Activated CD4-positive, alpha-beta T cell treated with anti-CD3 and anti-CD28 coated beads, Interleukin-2, amount 10 ng/mL, durations not matched to agents 7 days and 5 days (primary cell): ENCODE measurements at regions of chr22 and their contacts with region 1.

Region 1: GRCh38 chr22:50562523-50563412 is at the start of gene SYCE3:
- DNase-seq: peak; percentile 97
- H3K4me3 Mint-ChIP-seq: peak within 1 kb of the TSS; percentile 80
- H3K27ac Mint-ChIP-seq: peak within 1 kb of the TSS; percentile 85
- H3K4me1 Mint-ChIP-seq: peaks cover 24% of the 10 kb centered on the region
- H3K27me3 Mint-ChIP-seq: peaks cover 15% of the 10 kb centered on the region
- total RNA-seq, gene SYCE3: 0.87 TPM in 1 of 2 experiments, not detected in the other

Region 2: GRCh38 chr22:50537765-50538164 is 25.0 kb before region 1 on chr22:
- CTCF ChIA-PET with region 1: interaction called, 45 read pairs
- POLR2A ChIA-PET with region 1: interaction called, 4 read pairs
- DNase-seq: no peak
- H3K4me3 Mint-ChIP-seq: no peak overlapping the region
- H3K27ac Mint-ChIP-seq: no peak overlapping the region
- H3K4me1 Mint-ChIP-seq: peaks cover 80% of the 10 kb centered on the region
- H3K27me3 Mint-ChIP-seq: no peaks in the 10 kb centered on the region

Region 3: GRCh38 chr22:50544078-50544745 is 18.6 kb before region 1 on chr22:
- CTCF ChIA-PET with region 1: interaction called, 64 read pairs
- POLR2A ChIA-PET with region 1: no interaction called
- DNase-seq: peak; percentile 86
- H3K4me3 Mint-ChIP-seq: peak overlapping the region; percentile 62
- H3K27ac Mint-ChIP-seq: peak overlapping the region; percentile 92
- H3K4me1 Mint-ChIP-seq: peaks cover 58% of the 10 kb centered on the region
- H3K27me3 Mint-ChIP-seq: no peaks in the 10 kb centered on the region

Region 4: GRCh38 chr22:50576070-50576469 is 13.3 kb after region 1 on chr22:
- CTCF ChIA-PET with region 1: interaction called, 17 read pairs
- POLR2A ChIA-PET with region 1: interaction called, 3 read pairs
- DNase-seq: no peak
- H3K4me3 Mint-ChIP-seq: no peak overlapping the region
- H3K27ac Mint-ChIP-seq: no peak overlapping the region
- H3K4me1 Mint-ChIP-seq: peaks cover 24% of the 10 kb centered on the region
- H3K27me3 Mint-ChIP-seq: no peaks in the 10 kb centered on the region

Region 5: DNA sequence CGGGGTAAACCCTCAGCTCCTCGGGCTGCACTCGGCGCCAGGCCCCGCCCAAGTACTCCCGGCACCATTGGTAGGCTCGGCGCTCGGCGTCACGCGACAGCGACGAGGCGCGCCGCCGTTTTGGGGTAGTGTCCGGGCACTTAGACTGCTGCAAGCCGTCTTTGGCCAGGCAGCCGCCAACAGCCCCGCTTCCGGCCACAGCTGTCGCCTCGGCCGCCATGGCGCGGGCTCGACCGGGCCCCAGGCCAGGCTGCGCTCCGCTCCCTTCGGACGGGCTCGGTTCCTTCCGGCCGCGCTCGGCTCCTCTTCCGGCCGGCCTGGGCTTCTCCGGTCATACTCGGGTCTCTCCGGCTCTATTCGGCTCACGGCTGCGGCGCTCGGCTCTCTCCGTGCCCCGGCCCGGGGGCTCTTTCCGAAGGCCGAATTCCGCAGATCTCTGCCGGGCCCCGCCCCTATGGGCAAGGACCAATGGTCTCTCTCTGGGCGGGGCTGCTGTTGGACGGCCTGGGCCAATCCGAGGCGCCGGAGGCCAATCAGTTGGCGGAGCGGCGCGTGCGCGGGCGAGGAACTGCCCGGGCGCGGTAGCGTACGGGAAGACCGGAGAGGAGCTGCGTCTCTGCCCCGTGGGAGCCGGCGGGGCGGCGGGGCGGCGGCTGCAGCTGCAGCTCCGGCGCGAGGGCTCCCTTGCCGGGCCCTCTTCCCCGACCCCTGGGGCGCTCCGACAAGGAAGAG is 20.0 kb after region 1 on chr22 and contains the start of gene CHKB:
- CTCF ChIA-PET with region 1: interaction called, 17 read pairs
- POLR2A ChIA-PET with region 1: interaction called, 3 read pairs
- DNase-seq: peak; percentile 99
- H3K4me3 Mint-ChIP-seq: peak within 1 kb of the TSS; percentile 88
- H3K27ac Mint-ChIP-seq: peak within 1 kb of the TSS; percentile 98
- H3K4me1 Mint-ChIP-seq: peaks cover 31% of the 10 kb centered on the region
- H3K27me3 Mint-ChIP-seq: no peaks in the 10 kb centered on the region
- total RNA-seq, gene CHKB: 140 to 142 TPM

Region 6: DNA sequence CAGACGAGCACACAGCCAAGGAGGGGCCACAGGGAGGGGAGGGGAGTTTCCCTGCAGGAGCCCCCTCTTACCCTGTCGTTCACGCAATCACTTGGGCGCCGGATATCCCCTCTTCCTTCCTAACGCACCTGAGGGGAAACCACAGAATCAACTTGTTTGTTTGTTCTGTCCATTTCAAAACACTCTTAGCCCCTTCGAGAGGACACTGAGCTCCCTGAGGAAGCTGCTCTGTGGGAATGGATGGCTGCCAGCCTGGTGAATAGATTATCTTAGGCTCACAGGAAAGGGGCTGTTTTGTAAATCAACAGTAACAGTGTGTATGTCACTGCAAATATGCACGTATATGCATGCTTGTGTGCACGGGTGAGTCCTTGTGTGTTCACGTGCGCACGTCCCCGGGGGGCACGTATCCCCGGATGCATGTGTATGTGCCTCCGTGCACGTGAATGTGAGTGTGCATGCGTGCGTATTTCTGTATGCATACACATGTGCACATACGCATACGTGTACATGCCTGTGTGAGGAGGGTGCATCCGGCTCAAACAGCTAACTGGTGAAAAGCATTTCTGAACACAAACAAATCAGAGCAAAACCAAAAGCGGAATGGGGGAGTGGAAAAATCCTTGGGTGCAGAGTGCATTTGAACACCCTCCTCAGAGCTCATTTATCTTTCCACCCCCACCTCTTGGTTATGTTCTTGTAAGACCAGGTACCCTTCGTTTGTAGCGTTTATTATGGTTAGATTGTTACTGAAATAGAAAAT is 58.0 kb after region 1 on chr22:
- CTCF ChIA-PET with region 1: interaction called, 12 read pairs
- POLR2A ChIA-PET with region 1: interaction called, 5 read pairs
- DNase-seq: peak; percentile 88
- H3K4me3 Mint-ChIP-seq: peak overlapping the region; percentile 82
- H3K27ac Mint-ChIP-seq: peak overlapping the region; percentile 100
- H3K4me1 Mint-ChIP-seq: peaks cover 48% of the 10 kb centered on the region
- H3K27me3 Mint-ChIP-seq: peaks cover 1% of the 10 kb centered on the region

Region 7: DNA sequence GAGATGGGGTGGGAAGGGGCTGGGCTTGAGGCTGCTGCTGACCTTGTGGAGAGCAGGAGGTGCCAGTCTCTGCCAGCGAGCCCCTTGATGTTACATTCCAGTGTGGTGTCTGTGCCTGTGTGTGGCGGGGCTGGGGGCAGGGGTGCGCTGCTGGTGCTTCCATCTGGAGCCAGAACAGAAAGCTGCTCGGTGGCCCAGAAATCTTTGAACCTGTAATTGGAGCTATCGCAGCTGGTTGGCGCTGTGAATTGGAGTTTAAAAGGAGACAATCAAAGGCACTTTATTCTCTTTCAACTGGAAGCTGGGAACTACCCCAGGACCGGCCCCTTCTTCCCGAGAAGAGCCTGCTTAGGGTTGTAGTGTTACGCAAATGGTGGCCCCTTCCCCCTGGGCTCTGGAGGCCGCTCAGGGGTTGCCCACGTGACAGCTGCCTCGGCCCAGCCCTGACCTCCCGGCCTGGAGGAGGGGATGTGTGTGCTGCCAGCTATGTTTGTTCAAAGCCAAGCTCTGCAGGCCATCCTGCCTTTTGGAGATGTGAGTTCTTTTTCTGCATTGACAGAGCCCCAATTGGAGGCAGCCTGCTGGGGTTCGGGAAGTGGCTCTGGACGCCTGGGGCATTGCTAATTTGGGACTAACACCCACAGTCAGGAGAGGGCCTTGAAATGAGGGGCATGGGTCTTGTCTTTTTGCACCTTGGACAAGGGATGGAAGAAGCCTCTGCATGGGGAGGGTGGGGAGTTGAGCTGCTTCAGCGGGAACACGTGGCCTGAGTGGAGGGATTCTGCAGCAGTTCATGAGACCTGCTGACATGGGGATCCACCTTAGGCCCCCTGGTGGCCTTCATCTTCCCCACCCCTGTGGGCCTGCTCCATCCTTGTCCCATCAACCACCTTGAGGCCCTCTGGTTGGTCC is 79.2 kb after region 1 on chr22:
- CTCF ChIA-PET with region 1: no interaction called
- POLR2A ChIA-PET with region 1: no interaction called
- DNase-seq: no peak
- H3K4me3 Mint-ChIP-seq: no peak overlapping the region
- H3K27ac Mint-ChIP-seq: no peak overlapping the region
- H3K4me1 Mint-ChIP-seq: no peaks in the 10 kb centered on the region
- H3K27me3 Mint-ChIP-seq: peaks cover 4% of the 10 kb centered on the region